Activated naive CD4-positive, alpha-beta T cell treated with anti-CD3 and anti-CD28 coated beads for 36 hours (primary cell): ENCODE measurements at regions of chr10 and their contacts with region 1.

Region 1: DNA sequence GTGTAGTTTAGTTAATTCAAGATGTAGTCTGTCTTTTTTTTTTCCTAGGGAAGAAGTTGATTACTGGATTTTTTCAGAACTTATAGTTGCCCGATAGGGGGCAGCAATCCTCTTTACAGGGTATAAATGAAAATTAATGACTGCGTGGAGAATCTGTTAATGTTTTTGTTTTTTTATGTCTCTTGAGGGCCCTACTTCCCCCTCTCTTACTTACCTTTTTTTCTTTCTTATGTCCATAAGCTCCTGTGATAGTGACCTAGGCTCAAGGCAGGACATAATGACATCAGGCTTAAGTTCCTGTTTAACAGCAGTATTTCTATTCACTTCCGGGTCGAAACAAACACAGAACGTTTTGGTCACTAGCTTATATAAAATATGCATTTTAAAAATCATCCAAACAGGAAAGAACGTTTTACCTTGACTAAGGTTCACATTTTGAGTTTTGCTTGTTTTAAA is 18.8 kb downstream of the CDC123 start:
- DNase-seq: peak; percentile 64
- H3K4me3 Mint-ChIP-seq: peak overlapping the region; percentile 30
- H3K27ac Mint-ChIP-seq: peak overlapping the region; percentile 74
- H3K4me1 Mint-ChIP-seq: peaks cover 10% of the 10 kb centered on the region
- H3K27me3 Mint-ChIP-seq: no peaks in the 10 kb centered on the region

Region 2: DNA sequence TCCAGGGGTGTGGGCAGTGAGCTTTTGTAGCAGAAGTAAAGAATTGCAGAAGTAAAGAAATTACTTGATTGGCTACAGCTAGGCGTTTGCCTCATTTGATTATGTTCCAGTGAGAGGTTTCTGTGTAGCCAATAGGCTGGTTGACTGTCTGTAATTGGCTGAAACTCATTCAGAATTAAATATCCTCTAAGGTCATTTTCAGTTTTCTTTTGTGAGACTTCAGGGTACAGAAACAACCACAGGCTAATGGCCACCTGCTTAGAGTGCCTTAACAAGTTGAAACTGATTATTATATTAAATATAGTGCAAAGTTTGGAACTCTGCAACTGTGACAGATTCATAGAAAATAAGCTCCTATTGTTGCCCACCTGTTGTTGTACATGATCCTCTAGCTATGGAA is 74.8 kb before region 1 on chr10:
- CTCF ChIA-PET with region 1: interaction called, 10 read pairs
- intact Hi-C with region 1: no loop called
- DNase-seq: no peak
- H3K4me3 Mint-ChIP-seq: no peak overlapping the region
- H3K27ac Mint-ChIP-seq: no peak overlapping the region
- H3K4me1 Mint-ChIP-seq: no peaks in the 10 kb centered on the region
- H3K27me3 Mint-ChIP-seq: no peaks in the 10 kb centered on the region

Region 3: GRCh38 chr10:12195603-12196506 is 18.9 kb before region 1 on chr10 and contains the starts of genes CDC123 and NUDT5:
- CTCF ChIA-PET with region 1: interaction called, 15 read pairs
- intact Hi-C with region 1: no loop called
- DNase-seq: peak; percentile 93
- H3K4me3 Mint-ChIP-seq: peak within 1 kb of the TSS; percentile 96
- H3K27ac Mint-ChIP-seq: peak within 1 kb of the TSS; percentile 98
- H3K4me1 Mint-ChIP-seq: peaks cover 58% of the 10 kb centered on the region
- H3K27me3 Mint-ChIP-seq: no peaks in the 10 kb centered on the region
- total RNA-seq, gene CDC123: 108 to 117 TPM
- total RNA-seq, gene NUDT5: 97.1 to 100 TPM

Region 4: GRCh38 chr10:12201543-12201942 is 13.2 kb before region 1 on chr10:
- CTCF ChIA-PET with region 1: interaction called, 15 read pairs
- intact Hi-C with region 1: no loop called
- DNase-seq: peak; percentile 46
- H3K4me3 Mint-ChIP-seq: no peak overlapping the region
- H3K27ac Mint-ChIP-seq: peak overlapping the region; percentile 53
- H3K4me1 Mint-ChIP-seq: peaks cover 53% of the 10 kb centered on the region
- H3K27me3 Mint-ChIP-seq: no peaks in the 10 kb centered on the region

Region 5: DNA sequence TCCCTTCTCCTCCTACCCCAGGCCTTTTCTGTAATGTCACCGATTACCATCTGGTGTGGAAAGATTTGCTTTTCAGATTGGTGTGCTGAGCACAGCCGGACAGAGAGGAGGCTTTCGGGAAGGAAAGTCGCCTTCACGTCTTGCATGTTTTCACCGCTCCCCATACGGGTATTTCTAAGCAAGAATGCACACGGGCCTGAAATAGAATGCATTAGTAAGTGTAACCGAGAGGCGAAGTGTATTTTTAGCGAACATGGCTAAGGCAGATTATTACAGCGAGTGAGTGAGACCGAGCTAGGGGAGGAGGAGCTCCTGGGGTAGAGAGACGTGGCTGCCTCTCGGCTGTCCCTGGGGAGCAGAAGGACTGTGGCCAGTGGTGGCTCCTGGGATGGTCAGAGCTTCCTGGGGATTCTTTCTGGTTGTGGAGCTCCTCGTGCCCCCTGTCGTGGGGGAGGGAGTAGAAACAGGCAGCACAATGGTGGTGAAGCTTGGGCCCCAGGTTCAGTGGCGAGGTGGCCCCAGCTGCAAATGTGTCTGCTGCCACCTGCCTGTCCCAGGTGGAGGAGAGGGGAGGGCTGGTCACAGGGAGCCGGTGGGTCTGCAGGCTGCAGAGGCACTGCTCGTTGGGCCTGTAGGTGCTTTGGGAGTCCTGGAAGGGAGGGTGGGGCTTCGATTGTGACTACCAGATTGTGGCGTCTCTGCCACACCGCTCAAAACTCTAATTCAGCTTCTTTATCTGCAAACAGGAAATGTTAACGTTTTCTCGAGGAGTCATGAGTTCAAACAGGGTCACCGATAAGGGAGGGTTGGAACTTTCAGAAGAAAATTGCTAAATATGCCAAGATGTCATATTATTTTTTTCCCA is 270.4 kb after region 1 on chr10:
- CTCF ChIA-PET with region 1: interaction called, 4 read pairs
- intact Hi-C with region 1: loop called (anchors 1 kb)
- DNase-seq: peak; percentile 65
- H3K4me3 Mint-ChIP-seq: peak overlapping the region; percentile 25
- H3K27ac Mint-ChIP-seq: peak overlapping the region; percentile 8
- H3K4me1 Mint-ChIP-seq: peaks cover 20% of the 10 kb centered on the region
- H3K27me3 Mint-ChIP-seq: no peaks in the 10 kb centered on the region

Region 6: GRCh38 chr10:12656518-12657142 is 441.8 kb after region 1 on chr10:
- CTCF ChIA-PET with region 1: interaction called, 4 read pairs
- intact Hi-C with region 1: loop called (anchors 1 kb)
- DNase-seq: no peak
- H3K4me3 Mint-ChIP-seq: no peak overlapping the region
- H3K27ac Mint-ChIP-seq: no peak overlapping the region
- H3K4me1 Mint-ChIP-seq: peaks cover 2% of the 10 kb centered on the region
- H3K27me3 Mint-ChIP-seq: no peaks in the 10 kb centered on the region

Region 7: DNA sequence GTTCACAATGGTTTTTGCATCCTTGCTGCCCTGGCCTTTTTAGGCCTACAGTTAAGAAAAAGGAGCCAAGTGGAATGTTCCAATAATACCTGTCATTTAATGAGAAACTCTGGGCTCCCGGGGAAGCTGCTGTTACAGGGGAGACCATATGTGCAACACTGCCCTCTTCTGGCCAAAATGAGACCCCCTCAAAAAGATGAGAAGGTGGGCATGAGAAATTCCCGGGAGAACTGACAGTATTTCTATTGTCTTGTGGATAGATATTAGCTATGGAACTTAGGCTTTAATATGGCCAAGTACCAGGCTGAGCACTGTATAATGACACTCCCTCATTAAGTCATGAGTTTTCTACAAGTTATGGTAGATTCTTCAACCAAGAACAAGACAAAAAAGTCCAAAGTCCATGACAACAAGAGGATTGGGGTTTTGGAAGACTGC is 687.4 kb after region 1 on chr10:
- CTCF ChIA-PET with region 1: interaction called, 5 read pairs
- intact Hi-C with region 1: loop called (anchors 1 kb)
- DNase-seq: peak; percentile 71
- H3K4me3 Mint-ChIP-seq: no peak overlapping the region
- H3K27ac Mint-ChIP-seq: no peak overlapping the region
- H3K4me1 Mint-ChIP-seq: no peaks in the 10 kb centered on the region
- H3K27me3 Mint-ChIP-seq: peaks cover 5% of the 10 kb centered on the region